H1 (cell line): ENCODE measurements at regions of chr12 and their contacts with region 1.

Region 1: GRCh38 chr12:120228291-120229070 is 27.6 kb upstream of the RPLP0 start:
- DNase-seq: peak; percentile 90 to 93
- H3K4me3 ChIP-seq: peak overlapping the region in 3 of 4 experiments; percentile 30 to 53 (median 49); a peak in 5 of 8 replicates
- H3K27ac ChIP-seq: peak overlapping the region; percentile 96
- H3K4me1 ChIP-seq: peaks cover 33 to 69% (median 42%) of the 10 kb centered on the region in 4 experiments
- H3K27me3 ChIP-seq: no peaks in the 10 kb centered on the region
- CTCF ChIP-seq: peak in 2 of 3 experiments; percentile 92 to 99; a peak in 3 of 4 replicates
- EP300 ChIP-seq: peak in 1 of 2 experiments; percentile 97; a peak in 1 of 3 replicates
- POLR2A ChIP-seq: peak in 1 of 2 experiments; percentile 77; a peak in 2 of 3 replicates
- RAD21 ChIP-seq: peak; percentile 97 to 98

Region 2: DNA sequence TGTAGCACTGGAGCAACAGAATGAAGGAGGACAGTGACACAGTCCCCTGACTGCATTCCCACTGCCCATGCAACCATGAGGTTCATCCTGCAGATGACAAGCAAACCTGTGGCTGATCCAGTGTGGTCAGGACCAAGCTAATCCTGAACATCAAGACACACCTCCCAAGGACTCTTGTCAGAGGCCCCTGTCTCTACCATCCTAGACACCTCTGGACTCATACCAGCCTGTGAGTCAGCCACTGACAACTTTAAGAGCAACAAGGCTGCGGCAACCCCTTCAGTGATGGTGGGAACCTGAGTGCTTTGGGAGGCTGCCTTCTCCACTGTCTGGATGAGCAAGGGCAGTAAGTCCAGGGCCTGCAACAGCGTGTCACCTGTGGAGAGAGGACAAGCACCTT is 58.5 kb before region 1 on chr12:
- CTCF ChIA-PET with region 1: no interaction called
- POLR2A ChIA-PET with region 1: no interaction called
- DNase-seq: no peak
- H3K4me3 ChIP-seq: no peak overlapping the region
- H3K27ac ChIP-seq: no peak overlapping the region
- H3K4me1 ChIP-seq: no peaks in the 10 kb centered on the region
- H3K27me3 ChIP-seq: no peaks in the 10 kb centered on the region
- CTCF ChIP-seq: no peak
- EP300 ChIP-seq: no peak
- POLR2A ChIP-seq: no peak
- RAD21 ChIP-seq: no peak

Region 3: DNA sequence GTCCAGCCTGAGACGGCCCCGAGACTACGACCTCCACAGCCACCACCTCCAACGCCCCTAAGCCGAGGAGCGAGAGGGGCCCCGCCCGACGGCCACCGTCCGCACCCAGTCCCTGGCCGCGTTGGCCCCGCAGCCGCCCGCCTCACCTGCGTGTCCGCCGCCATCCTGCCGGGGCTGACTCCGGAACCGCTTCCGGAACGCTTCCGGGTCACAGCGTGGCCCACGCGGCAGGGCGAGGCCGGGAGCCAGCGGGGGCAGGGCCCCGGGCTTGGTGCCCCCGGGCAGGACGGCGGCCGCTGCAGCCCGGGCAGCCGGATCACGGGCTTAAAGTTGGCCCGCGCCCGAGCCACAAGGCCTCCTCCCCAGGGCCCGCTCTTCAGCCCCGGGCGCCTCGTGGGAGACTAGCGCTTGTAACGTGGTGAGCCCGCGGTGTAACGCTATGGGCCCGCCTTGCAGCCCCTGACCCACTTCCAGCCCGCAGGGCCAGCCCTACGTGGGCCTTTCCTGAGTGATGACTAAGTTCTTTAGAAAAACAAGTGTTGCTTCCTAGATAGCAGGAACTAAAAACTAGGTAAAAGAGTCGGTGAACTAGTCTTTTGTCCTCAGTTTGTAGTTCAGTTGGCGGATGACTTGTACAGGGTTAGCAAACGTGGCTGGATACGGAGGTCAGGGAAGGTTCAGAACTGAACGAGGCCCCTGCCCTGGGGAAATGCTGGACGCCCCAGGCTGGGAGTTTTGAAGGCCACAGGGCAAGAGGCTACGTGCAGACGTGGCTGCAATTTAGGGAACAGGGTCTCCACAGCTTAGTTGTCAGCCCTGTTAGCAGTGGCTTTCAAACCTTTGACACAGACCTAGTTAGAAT is 33.7 kb before region 1 on chr12 and contains the start of gene GCN1:
- CTCF ChIA-PET with region 1: interaction called, 67 read pairs
- POLR2A ChIA-PET with region 1: interaction called, 1,305 read pairs
- DNase-seq: peak; percentile 62 to 94
- H3K4me3 ChIP-seq: peak within 1 kb of the TSS; percentile 86 to 96 (median 88)
- H3K27ac ChIP-seq: peak within 1 kb of the TSS; percentile 77
- H3K4me1 ChIP-seq: peaks cover 0 to 3% (median under 1%) of the 10 kb centered on the region in 4 experiments; a peak in 5 of 7 replicates
- H3K27me3 ChIP-seq: no peaks in the 10 kb centered on the region
- CTCF ChIP-seq: peak in 1 of 3 experiments; percentile 10; a peak in 1 of 4 replicates
- EP300 ChIP-seq: no peak
- POLR2A ChIP-seq: peak; percentile 90 to 93
- RAD21 ChIP-seq: no peak
- total RNA-seq, gene GCN1: 133 and 137 TPM in 2 replicates

Region 4: DNA sequence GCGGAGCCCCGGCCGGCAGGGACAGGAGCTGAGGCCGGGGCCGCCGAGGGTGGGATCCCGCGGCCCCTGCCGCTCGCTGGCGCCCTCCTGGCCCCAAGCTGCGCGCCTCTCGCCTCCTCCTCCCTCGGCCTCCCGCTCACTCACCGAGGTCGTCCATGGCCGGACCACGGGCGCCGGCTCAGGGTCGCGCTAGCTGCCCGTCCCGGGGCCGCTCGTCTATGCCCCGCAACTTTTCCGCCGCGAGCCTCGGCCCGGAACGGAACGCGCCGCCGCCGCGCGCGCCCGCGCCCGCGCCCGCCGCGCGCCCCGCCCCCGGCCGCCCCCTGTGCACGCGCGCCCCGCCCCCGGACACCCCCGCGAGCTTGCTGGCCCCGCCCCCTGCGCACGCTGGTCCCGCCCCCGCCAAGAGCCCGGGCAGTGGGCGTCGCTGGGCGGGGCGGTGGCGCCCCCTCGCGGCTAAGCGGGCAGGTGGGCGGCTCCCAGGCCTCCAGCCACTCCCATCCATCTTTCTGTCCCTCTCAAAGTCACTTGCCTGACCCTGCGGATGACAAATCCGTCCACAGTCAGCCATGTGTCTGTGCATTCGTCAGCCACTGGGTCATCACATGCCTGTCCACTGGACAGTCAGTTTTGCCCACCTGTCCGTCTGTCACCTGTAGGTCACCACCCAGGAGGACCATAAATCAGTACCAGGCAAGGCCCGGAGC is 37.1 kb after region 1 on chr12 and contains the start of gene PXN:
- CTCF ChIA-PET with region 1: interaction called, 930 read pairs
- POLR2A ChIA-PET with region 1: interaction called, 4,270 read pairs
- DNase-seq: peak in 1 of 2 experiments; percentile 97
- H3K4me3 ChIP-seq: peak within 1 kb of the TSS; percentile 65 to 85 (median 80)
- H3K27ac ChIP-seq: peak within 1 kb of the TSS; percentile 83
- H3K4me1 ChIP-seq: peaks cover 15 to 29% (median 19%) of the 10 kb centered on the region in 4 experiments
- H3K27me3 ChIP-seq: no peaks in the 10 kb centered on the region
- CTCF ChIP-seq: peak; percentile 79 to 91 (median 91)
- EP300 ChIP-seq: no peak
- POLR2A ChIP-seq: peak in 1 of 2 experiments; percentile 70; a peak in 2 of 3 replicates
- RAD21 ChIP-seq: peak; percentile 87 to 91
- total RNA-seq, gene PXN: 105 and 109 TPM in 2 replicates

Region 5: GRCh38 chr12:120286796-120287465 is 58.5 kb after region 1 on chr12:
- CTCF ChIA-PET with region 1: interaction called, 148 read pairs
- POLR2A ChIA-PET with region 1: interaction called, 4,270 read pairs
- DNase-seq: no peak
- H3K4me3 ChIP-seq: no peak overlapping the region
- H3K27ac ChIP-seq: no peak overlapping the region
- H3K4me1 ChIP-seq: peaks cover 2 to 7% (median 4%) of the 10 kb centered on the region in 4 experiments; a peak in 5 of 7 replicates
- H3K27me3 ChIP-seq: no peaks in the 10 kb centered on the region
- CTCF ChIP-seq: no peak
- EP300 ChIP-seq: no peak
- POLR2A ChIP-seq: no peak
- RAD21 ChIP-seq: no peak

Region 6: DNA sequence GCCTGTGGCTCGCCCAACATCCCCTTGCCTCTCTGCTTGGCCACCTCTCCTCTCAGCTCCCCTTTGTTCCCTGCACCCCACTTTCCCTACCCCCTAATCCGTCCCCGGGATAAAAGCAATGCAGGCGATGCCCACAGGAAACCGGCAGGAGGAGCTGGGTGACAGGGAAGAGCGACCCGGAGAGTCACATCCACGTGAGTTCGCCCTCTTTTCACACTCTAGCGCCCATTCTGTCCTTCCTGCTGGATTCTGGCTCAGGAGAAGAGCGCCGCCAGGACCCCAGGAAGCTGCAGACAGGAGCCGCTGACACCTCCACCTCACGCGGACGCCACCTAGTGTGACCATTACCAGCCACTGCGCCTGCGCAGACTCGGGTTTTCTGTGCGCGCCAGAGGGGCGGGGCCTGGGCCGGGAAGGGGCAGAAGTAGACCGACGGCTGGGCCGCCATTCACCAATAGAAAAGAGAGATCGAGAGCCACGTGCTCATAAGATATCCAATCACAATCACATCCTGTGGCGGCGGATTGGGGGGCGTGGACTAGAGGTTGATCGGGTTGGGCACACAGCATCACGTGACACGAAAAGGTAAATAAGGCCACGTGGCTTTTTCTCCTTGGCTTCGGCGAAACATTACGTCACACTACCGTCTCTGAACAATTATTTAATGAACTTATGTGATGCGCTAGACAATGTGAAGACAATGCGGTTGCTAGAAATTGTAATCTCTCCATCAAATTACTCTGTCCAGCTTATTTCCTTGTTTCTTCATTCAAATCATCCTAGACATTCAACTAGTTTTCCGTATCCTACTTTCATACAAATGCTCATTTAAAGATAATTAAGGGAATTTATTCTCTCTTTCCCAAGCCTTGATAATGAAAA is 89.0 kb after region 1 on chr12:
- CTCF ChIA-PET with region 1: interaction called, 15 read pairs
- POLR2A ChIA-PET with region 1: interaction called, 7 read pairs
- DNase-seq: peak; percentile 97 to 100
- H3K4me3 ChIP-seq: peak overlapping the region; percentile 33 to 67 (median 56)
- H3K27ac ChIP-seq: peak overlapping the region; percentile 68; the same call in 1 of the 2 replicates
- H3K4me1 ChIP-seq: peaks cover 0 to 8% (median 4%) of the 10 kb centered on the region in 4 experiments; a peak in 3 of 7 replicates
- H3K27me3 ChIP-seq: no peaks in the 10 kb centered on the region
- CTCF ChIP-seq: peak; percentile 28 to 63 (median 45)
- EP300 ChIP-seq: no peak
- POLR2A ChIP-seq: peak in 1 of 2 experiments; percentile 78; a peak in 1 of 3 replicates
- RAD21 ChIP-seq: peak; percentile 23; a peak in 2 of 4 replicates